Ovary (tissue), 10 donors: ENCODE measurements at regions of chr1 and their contacts with region 1.

Region 1: GRCh38 chr1:40090652-40091355 is 6.2 kb downstream of the PPT1 start:
- DNase-seq: no peak
- H3K4me3 ChIP-seq: no peak overlapping the region
- H3K27ac ChIP-seq: no peak overlapping the region
- H3K4me1 ChIP-seq: no peaks in the 10 kb centered on the region
- H3K27me3 ChIP-seq: no peaks in the 10 kb centered on the region
- CTCF ChIP-seq: no peak
- EP300 ChIP-seq: no peak
- POLR2A ChIP-seq: no peak

Region 2: GRCh38 chr1:40053138-40053887 is 37.5 kb before region 1 on chr1:
- intact Hi-C with region 1: loop called in 1 of 4 experiments (anchors 1 kb)
- DNase-seq: no peak
- H3K4me3 ChIP-seq: no peak overlapping the region
- H3K27ac ChIP-seq: no peak overlapping the region
- H3K4me1 ChIP-seq: peaks cover 8% of the 10 kb centered on the region
- H3K27me3 ChIP-seq: no peaks in the 10 kb centered on the region
- CTCF ChIP-seq: no peak
- EP300 ChIP-seq: no peak
- POLR2A ChIP-seq: no peak

Region 3: GRCh38 chr1:40161125-40161887 is 70.5 kb after region 1 on chr1 and contains the start of gene RLF:
- intact Hi-C with region 1: no loop called
- DNase-seq: peak; percentile 93 to 97 (median 96)
- H3K4me3 ChIP-seq: peak within 1 kb of the TSS; percentile 96
- H3K27ac ChIP-seq: peak within 1 kb of the TSS; percentile 65 to 89
- H3K4me1 ChIP-seq: peaks cover 5% of the 10 kb centered on the region
- H3K27me3 ChIP-seq: no peaks in the 10 kb centered on the region
- CTCF ChIP-seq: peak in 1 of 3 donors; percentile 35
- EP300 ChIP-seq: peak; percentile 56
- POLR2A ChIP-seq: peak; percentile 96
- total RNA-seq, gene RLF: 16.5 to 29.3 (median 19.1) TPM

Region 4: DNA sequence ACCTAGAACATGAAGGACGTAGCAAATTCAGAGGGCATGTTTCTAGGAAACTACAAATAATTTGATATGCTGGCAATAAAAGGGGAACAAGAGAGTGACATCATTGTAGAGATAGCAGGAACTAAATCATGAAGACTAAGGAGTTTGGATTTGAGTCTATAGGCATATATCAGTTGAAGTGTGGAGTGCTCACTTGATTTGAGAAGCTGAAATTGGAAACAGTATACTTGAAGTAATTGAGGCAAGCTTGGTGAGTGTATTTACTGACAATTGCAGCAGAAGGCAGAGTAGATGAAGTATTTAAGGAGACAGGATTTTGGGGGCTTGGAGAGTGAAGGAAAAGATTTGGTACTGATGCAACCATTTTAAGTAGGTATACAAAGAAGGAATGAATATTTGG is 150.6 kb after region 1 on chr1:
- intact Hi-C with region 1: no loop called
- DNase-seq: no peak
- H3K4me3 ChIP-seq: no peak overlapping the region
- H3K27ac ChIP-seq: no peak overlapping the region
- H3K4me1 ChIP-seq: no peaks in the 10 kb centered on the region
- H3K27me3 ChIP-seq: no peaks in the 10 kb centered on the region
- CTCF ChIP-seq: no peak
- EP300 ChIP-seq: no peak
- POLR2A ChIP-seq: no peak